Transverse colon (tissue), 4 donors: ENCODE measurements at regions of chr1 and their contacts with region 1.

Region 1: DNA sequence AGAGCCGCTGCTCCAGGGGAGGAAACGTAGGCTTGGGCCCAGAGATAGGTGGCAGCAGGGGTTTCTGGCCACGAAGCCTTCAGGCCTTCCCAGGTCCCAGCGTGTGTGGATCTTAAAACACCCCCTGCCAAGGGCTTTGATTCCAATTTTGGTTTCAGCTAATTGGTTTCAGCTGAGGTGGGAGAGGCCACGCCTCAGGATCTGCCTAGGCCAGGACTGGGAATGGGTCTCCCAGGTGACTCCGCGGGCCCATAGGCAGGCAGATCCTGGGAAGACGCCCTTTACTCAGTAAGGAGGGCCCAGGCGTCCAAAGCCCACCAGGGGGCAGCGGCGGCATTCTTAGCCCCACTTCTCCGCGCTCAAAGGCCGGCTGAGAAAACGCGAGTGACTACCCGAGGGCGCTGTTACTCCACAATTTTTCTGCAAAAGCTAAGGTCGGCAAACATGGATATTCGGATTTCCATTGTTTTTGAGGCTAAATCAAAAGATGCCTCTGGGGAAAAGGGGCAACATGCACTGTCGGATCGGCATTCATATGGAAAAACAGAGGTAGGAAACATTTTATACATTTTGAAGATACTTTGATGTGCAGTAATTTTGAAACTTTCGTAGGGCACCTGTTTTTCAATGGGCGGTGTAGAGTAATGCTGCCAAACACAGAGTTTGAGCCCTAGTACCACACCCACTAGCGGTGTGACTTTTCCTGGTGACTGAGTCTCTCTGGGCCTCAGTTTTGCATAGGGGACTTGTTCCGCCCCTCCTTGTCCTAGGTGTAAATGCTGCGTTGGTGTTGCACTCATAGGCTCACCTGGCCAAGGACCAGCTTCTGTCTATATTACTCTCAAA is 31.8 kb upstream of the BCL10 start:
- DNase-seq: peak; percentile 88
- H3K4me3 ChIP-seq: no peak overlapping the region
- H3K27ac ChIP-seq: no peak overlapping the region
- H3K4me1 ChIP-seq: peaks cover 0 to 9% (median 6%) of the 10 kb centered on the region in 4 donors
- H3K27me3 ChIP-seq: no peaks in the 10 kb centered on the region
- CTCF ChIP-seq: peak; percentile 89 to 95 (median 93)
- EP300 ChIP-seq: no peak
- POLR2A ChIP-seq: no peak

Region 2: DNA sequence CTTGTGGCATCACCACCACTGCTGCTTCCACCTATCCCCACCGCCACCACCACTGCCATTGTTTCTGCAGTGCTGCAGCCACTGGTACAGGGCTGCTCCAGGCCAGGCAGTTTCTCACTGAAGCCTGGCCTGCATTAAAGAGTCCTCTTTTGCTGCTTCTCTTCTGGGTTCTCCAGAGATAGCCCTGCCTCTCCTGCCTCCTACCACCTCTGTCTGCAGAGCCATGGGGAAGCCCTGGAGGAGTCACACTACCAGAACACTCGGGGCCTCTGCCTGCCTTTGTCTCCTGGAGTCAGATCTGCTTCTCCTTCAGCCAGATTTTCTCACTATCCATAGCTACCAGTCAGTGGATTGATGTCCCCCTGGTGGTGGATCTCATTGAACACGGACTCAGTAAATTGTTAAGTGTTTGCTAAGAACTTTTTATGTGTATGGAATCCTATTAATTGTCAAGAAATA is 194.4 kb after region 1 on chr1:
- in situ Hi-C with region 1: loop called in 3 of 4 experiments (anchors 10 to 25 kb)
- intact Hi-C with region 1: loop called (anchors 1 kb)
- DNase-seq: peak; percentile 53
- H3K4me3 ChIP-seq: no peak overlapping the region
- H3K27ac ChIP-seq: peak overlapping the region in 1 of 4 donors; percentile 15
- H3K4me1 ChIP-seq: peaks cover 0 to 12% (median 3%) of the 10 kb centered on the region in 4 donors
- H3K27me3 ChIP-seq: no peaks in the 10 kb centered on the region
- CTCF ChIP-seq: peak; percentile 57 to 67 (median 61)
- EP300 ChIP-seq: no peak
- POLR2A ChIP-seq: no peak

Region 3: DNA sequence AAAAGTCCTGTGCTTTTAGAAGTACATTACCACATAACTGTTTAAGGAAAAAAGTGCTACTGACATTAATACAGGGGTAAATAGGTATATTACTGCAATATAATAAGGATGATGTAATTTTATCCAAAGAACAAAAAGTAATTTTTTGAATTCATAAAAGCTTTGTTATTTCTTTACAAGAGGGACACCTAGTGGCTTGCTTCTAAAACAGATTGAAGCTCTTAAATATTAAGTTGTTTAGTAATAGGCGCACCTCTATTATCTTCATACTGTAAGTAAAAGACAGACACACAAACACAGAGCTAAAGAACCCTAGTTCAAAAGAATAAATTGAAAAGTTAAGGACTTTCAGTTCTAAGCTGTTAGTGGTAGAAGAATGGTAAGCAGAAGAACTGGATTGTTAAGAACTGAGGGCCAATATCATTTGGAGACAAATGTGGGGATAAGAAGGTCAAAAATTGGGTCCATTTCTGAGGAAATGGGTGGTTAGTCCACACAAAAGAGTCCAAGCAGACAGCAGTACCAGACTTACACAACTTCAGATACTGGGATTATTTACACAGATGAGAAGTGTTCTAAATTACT is 384.6 kb after region 1 on chr1:
- in situ Hi-C with region 1: loop called in 1 of 4 experiments (anchors 25 kb)
- intact Hi-C with region 1: loop called (anchors 5 kb)
- DNase-seq: no peak
- H3K4me3 ChIP-seq: no peak overlapping the region
- H3K27ac ChIP-seq: no peak overlapping the region
- H3K4me1 ChIP-seq: peaks cover 0 to 5% (median 0%) of the 10 kb centered on the region in 4 donors
- H3K27me3 ChIP-seq: no peaks in the 10 kb centered on the region
- CTCF ChIP-seq: peak; percentile 31 to 47 (median 39)
- EP300 ChIP-seq: no peak
- POLR2A ChIP-seq: no peak

Region 4: DNA sequence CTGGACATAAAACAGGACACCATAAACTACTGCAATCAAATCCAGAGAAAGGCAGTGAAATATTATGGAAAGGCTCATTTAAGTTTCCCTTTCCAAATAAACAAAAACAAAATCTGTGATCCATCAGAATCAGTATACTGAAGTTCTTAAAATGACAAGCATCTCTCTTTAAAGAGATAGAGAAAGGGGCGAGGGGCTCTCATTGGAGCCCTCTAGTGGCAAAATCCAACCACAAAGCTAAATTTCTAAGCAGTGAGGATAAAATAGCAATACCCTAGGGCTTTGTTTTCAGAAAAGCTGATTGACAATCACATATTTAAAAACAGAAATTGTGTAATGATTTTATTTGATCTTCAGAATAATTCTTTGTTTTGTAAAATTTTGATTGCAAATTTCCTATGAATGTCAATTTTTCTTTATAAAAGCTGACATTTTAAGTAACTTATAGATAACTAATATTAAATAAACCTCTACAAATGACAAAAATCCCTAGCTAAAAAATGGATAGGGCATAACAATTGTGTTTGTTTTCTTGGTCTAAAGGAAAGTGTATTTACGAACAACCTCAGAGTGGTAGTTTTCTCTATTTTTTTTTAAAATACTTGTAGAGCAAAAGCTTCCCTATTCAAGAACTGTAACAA is 710.2 kb after region 1 on chr1:
- in situ Hi-C with region 1: loop called in 2 of 4 experiments (anchors 10 to 25 kb)
- intact Hi-C with region 1: no loop called
- DNase-seq: no peak
- H3K4me3 ChIP-seq: no peak overlapping the region
- H3K27ac ChIP-seq: no peak overlapping the region
- H3K4me1 ChIP-seq: no peaks in the 10 kb centered on the region
- H3K27me3 ChIP-seq: no peaks in the 10 kb centered on the region
- CTCF ChIP-seq: peak; percentile 36 to 62 (median 52)
- EP300 ChIP-seq: no peak
- POLR2A ChIP-seq: no peak